ENCODE measurements at regions of chr5 and their contacts with region 1.

Region 1: GRCh38 chr5:56656816-56657729 is 158.3 kb upstream of the MAP3K1 start:
- DNase-seq: no peak
- H3K4me3 Mint-ChIP-seq: no peak overlapping the region
- H3K27ac Mint-ChIP-seq: no peak overlapping the region
- H3K4me1 Mint-ChIP-seq: peaks cover 17% of the 10 kb centered on the region
- H3K27me3 Mint-ChIP-seq: peaks cover 21% of the 10 kb centered on the region

Region 2: GRCh38 chr5:56737002-56737621 is 80.0 kb after region 1 on chr5:
- intact Hi-C with region 1: loop called (anchors 2 kb)
- DNase-seq: no peak
- H3K4me3 Mint-ChIP-seq: no peak overlapping the region
- H3K27ac Mint-ChIP-seq: peak overlapping the region; percentile 38
- H3K4me1 Mint-ChIP-seq: peaks cover 30% of the 10 kb centered on the region
- H3K27me3 Mint-ChIP-seq: no peaks in the 10 kb centered on the region

Measured in activated T-helper 2 cell treated with anti-CD3 and anti-CD28 coated beads, Interferon-gamma antibody, Interleukin-2, Interleukin-4, amounts not matched to agents 10 μg/mL and 5 μg/mL and 100 μg/mL, durations not matched to agents 14 hours and 24 hours and 36 hours (primary cell).